ENCODE measurements at regions of chr12 and their contacts with region 1.

Region 1: GRCh38 chr12:21677622-21678277 is 20.1 kb upstream of the LDHB start:
- DNase-seq: no peak
- H3K4me3 ChIP-seq: no peak overlapping the region
- H3K27ac ChIP-seq: no peak overlapping the region
- H3K4me1 ChIP-seq: no peaks in the 10 kb centered on the region
- H3K27me3 ChIP-seq: no peaks in the 10 kb centered on the region
- CTCF ChIP-seq: no peak
- POLR2A ChIP-seq: no peak

Region 2: DNA sequence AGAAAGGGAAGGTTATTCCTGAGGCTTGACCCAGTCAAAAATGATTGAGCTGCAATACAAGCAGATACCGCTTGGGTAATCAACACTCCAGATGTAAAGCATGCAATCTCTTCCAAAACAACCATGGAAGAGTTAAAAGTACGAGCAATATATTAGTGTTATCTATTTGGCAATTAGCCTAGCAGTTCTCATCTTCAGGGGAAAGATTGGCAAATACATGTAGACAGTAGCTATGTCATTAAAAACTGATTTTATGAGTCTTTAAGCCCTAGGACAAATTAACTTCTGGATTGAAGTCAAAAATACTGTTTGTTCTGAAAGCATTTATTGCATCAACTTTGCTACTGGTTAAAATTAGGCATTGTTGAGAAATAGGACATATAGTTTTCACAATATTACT is 63.8 kb before region 1 on chr12:
- intact Hi-C with region 1: loop called (anchors 5 kb)
- DNase-seq: no peak
- H3K4me3 ChIP-seq: no peak overlapping the region
- H3K27ac ChIP-seq: no peak overlapping the region
- H3K4me1 ChIP-seq: no peaks in the 10 kb centered on the region
- H3K27me3 ChIP-seq: no peaks in the 10 kb centered on the region
- CTCF ChIP-seq: no peak
- POLR2A ChIP-seq: no peak